Activated CD4-positive, alpha-beta memory T cell treated with anti-CD3 and anti-CD28 coated beads, Interleukin-2, amount 10 ng/mL, durations not matched to agents 7 days and 5 days (primary cell): ENCODE measurements at regions of chr17 and their contacts with region 1.

Region 1: DNA sequence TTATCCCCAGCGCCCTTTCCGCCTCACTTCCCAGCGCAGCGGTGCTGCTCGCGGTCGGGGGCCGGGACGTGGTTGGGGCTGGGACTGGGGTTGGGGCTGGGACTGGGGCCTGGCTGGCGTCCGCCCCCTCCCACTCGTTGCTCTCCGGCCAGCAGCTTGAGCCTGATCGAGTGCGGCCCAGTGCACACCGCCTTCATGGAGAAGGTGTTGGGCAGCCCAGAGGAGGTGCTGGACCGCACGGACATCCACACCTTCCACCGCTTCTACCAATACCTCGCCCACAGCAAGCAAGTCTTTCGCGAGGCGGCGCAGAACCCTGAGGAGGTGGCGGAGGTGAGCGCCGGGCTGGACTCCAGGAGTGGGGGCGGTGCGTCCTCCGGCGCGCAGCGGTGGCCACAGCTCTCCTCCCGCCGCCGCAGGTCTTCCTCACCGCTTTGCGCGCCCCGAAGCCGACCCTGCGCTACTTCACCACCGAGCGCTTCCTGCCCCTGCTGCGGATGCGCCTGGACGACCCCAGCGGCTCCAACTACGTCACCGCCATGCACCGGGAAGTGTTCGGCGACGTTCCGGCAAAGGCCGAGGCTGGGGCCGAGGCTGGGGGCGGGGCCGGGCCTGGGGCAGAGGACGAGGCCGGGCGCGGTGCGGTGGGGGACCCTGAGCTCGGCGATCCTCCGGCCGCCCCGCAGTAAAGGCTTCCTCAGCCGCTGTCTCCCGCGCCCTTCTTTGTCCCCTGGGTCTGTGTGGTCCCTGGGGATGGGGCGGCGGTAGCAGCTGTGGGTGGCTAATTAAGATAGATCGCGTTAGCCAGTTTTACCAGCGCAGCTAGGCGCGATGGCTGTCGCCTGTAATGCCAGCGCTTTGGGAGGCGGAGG is 1.8 kb downstream of the HSD17B1 start:
- DNase-seq: peak; percentile 82
- H3K4me3 Mint-ChIP-seq: peak overlapping the region; percentile 91
- H3K27ac Mint-ChIP-seq: peak overlapping the region; percentile 87
- H3K4me1 Mint-ChIP-seq: peaks cover 22% of the 10 kb centered on the region
- H3K27me3 Mint-ChIP-seq: no peaks in the 10 kb centered on the region

Region 2: DNA sequence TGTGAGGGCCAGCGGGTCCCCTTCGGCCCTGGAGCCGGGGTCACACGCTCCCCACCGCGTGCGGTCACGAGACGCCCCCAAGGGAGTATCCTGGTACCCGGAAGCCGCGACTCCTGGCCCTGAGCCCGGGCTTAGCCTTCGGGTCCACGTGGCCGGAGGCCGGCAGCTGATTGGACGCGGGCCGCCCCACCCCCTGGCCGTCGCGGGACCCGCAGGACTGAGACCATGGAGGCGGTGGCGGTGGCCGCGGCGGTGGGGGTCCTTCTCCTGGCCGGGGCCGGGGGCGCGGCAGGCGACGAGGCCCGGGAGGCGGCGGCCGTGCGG is 18.5 kb before region 1 on chr17 and contains the start of gene NAGLU:
- CTCF ChIA-PET with region 1: interaction called, 19 read pairs
- POLR2A ChIA-PET with region 1: interaction called, 14 read pairs
- DNase-seq: peak; percentile 89
- H3K4me3 Mint-ChIP-seq: peak within 1 kb of the TSS; percentile 82
- H3K27ac Mint-ChIP-seq: peak within 1 kb of the TSS; percentile 75
- H3K4me1 Mint-ChIP-seq: peaks cover 42% of the 10 kb centered on the region
- H3K27me3 Mint-ChIP-seq: peaks cover 12% of the 10 kb centered on the region
- total RNA-seq, gene NAGLU: 15.9 to 17.5 TPM

Region 3: GRCh38 chr17:42541041-42541833 is 13.2 kb before region 1 on chr17:
- CTCF ChIA-PET with region 1: interaction called, 19 read pairs
- POLR2A ChIA-PET with region 1: interaction called, 14 read pairs
- DNase-seq: no peak
- H3K4me3 Mint-ChIP-seq: no peak overlapping the region
- H3K27ac Mint-ChIP-seq: peak overlapping the region; percentile 15
- H3K4me1 Mint-ChIP-seq: peaks cover 32% of the 10 kb centered on the region
- H3K27me3 Mint-ChIP-seq: no peaks in the 10 kb centered on the region

Region 4: DNA sequence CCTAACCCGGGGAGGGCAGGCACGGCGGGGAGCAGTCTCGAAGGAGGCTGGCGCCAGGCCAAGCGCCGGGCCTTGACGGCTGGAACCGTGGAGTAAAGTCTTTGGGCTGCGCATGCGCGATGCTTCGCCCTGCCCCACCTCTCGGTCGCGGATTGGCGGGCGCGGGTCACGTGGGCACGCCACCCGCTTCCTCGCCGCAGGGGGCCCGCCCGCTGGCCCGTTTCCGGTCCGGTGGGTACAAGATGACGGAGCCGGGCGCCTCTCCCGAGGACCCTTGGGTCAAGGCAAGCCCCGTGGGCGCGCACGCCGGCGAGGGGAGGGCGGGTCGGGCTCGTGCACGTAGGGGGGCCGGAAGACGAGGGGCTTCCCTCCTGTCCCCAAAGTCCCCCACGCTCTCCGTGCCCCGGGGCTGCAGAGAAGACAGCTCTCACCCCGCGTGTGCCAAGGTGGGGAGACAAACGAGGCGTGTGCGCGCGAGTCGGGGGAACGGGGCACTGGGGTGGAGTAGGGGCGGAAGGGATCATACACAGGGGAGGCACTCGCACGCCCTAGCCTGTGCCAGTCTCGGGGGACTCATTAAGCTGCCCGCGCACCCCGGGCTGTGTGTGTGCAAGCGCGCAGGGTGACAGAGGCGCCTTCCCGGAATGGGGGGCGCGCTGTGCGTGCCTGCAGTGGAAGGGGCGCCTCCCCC is 12.5 kb after region 1 on chr17 and contains the start of gene MLX:
- CTCF ChIA-PET with region 1: no interaction called
- POLR2A ChIA-PET with region 1: interaction called, 23 read pairs
- DNase-seq: peak; percentile 93
- H3K4me3 Mint-ChIP-seq: peak within 1 kb of the TSS; percentile 92
- H3K27ac Mint-ChIP-seq: peak within 1 kb of the TSS; percentile 93
- H3K4me1 Mint-ChIP-seq: peaks cover 59% of the 10 kb centered on the region
- H3K27me3 Mint-ChIP-seq: no peaks in the 10 kb centered on the region
- total RNA-seq, gene MLX: 52.2 to 53.8 TPM